ENCODE measurements at regions of chr20 and their contacts with region 1.

Region 1: DNA sequence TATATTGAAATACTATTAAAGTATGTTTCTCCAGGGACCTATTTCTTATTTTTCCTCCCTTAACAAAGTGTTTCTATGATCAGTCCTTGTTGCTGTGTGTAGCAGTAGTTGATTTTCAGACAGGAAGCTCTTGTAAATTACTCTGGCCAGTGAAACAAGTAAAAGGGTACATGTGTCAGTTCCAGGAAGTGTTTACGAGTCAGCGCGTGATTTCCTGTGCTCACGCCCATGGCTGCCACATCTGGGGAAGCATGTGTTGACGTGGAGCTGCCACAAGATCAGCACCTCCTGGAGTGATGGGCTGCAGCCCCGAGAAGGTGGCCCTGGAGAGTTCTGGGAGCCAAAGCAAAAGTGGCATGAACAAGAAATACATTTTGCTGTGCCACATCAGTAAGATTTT is 38.6 kb upstream of the GGTLC1 start:
- DNase-seq: peak; percentile 89
- ATAC-seq: peak; percentile 97
- H3K4me3 Mint-ChIP-seq: peak overlapping the region; percentile 5
- H3K27ac Mint-ChIP-seq: peak overlapping the region; percentile 94
- H3K4me1 Mint-ChIP-seq: peaks cover 34% of the 10 kb centered on the region
- H3K27me3 Mint-ChIP-seq: no peaks in the 10 kb centered on the region
- CTCF ChIP-seq: no peak

Region 2: GRCh38 chr20:24039196-24039595 is 12.0 kb after region 1 on chr20:
- CTCF ChIA-PET with region 1: interaction called, 3 read pairs
- POLR2A ChIA-PET with region 1: interaction called, 12 read pairs
- intact Hi-C with region 1: no loop called
- DNase-seq: no peak
- ATAC-seq: no peak
- H3K4me3 Mint-ChIP-seq: no peak overlapping the region
- H3K27ac Mint-ChIP-seq: no peak overlapping the region
- H3K4me1 Mint-ChIP-seq: no peaks in the 10 kb centered on the region
- H3K27me3 Mint-ChIP-seq: no peaks in the 10 kb centered on the region
- CTCF ChIP-seq: no peak